WTC11 (cell line): ENCODE measurements at regions of chr7 and their contacts with region 1.

Region 1: GRCh38 chr7:42876182-42877068 is 35.4 kb downstream of the C7orf25 start:
- DNase-seq: peak; percentile 74
- ATAC-seq: peak; percentile 97
- H3K4me3 Mint-ChIP-seq: no peak overlapping the region
- H3K27ac Mint-ChIP-seq: peak overlapping the region; percentile 84
- H3K4me1 Mint-ChIP-seq: peaks cover 54% of the 10 kb centered on the region
- H3K27me3 Mint-ChIP-seq: no peaks in the 10 kb centered on the region
- CTCF ChIP-seq: peak; percentile 78

Region 2: DNA sequence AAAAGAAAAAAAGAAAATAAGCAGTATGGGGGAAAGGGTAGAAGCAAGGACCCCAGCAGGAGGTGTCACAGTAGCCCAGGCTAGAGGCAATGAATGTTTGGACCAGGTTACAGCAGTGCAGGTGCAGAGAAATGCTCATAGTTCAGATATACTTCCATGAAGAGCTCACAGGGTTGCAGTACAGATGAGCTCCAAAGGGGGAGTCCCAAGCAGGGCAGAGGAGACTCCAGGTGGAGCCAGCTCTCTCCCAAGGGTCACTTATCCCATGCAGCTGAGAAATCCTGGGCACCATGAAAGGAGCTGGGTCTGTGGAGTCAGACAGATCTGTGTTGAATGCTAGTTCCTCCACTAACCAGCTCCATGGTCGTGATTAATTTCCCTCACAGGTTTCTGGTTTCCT is 139.5 kb before region 1 on chr7:
- CTCF ChIA-PET with region 1: interaction called, 12 read pairs
- POLR2A ChIA-PET with region 1: no interaction called
- DNase-seq: peak; percentile 42
- ATAC-seq: peak; percentile 100
- H3K4me3 Mint-ChIP-seq: no peak overlapping the region
- H3K27ac Mint-ChIP-seq: no peak overlapping the region
- H3K4me1 Mint-ChIP-seq: no peaks in the 10 kb centered on the region
- H3K27me3 Mint-ChIP-seq: peaks cover 3% of the 10 kb centered on the region; the same call in 1 of the 2 replicates
- CTCF ChIP-seq: 0 out of 2 replicates have a peak, but pooled peaks have one; percentile 14

Region 3: GRCh38 chr7:42843205-42843800 is 33.1 kb before region 1 on chr7:
- CTCF ChIA-PET with region 1: interaction called, 17 read pairs
- POLR2A ChIA-PET with region 1: no interaction called
- DNase-seq: peak; percentile 68
- ATAC-seq: peak; percentile 99
- H3K4me3 Mint-ChIP-seq: no peak overlapping the region
- H3K27ac Mint-ChIP-seq: no peak overlapping the region
- H3K4me1 Mint-ChIP-seq: peaks cover 23% of the 10 kb centered on the region
- H3K27me3 Mint-ChIP-seq: no peaks in the 10 kb centered on the region
- CTCF ChIP-seq: 0 out of 2 replicates have a peak, but pooled peaks have one; percentile 17